ENCODE measurements at regions of chr6 and their contacts with region 1.

Region 1: DNA sequence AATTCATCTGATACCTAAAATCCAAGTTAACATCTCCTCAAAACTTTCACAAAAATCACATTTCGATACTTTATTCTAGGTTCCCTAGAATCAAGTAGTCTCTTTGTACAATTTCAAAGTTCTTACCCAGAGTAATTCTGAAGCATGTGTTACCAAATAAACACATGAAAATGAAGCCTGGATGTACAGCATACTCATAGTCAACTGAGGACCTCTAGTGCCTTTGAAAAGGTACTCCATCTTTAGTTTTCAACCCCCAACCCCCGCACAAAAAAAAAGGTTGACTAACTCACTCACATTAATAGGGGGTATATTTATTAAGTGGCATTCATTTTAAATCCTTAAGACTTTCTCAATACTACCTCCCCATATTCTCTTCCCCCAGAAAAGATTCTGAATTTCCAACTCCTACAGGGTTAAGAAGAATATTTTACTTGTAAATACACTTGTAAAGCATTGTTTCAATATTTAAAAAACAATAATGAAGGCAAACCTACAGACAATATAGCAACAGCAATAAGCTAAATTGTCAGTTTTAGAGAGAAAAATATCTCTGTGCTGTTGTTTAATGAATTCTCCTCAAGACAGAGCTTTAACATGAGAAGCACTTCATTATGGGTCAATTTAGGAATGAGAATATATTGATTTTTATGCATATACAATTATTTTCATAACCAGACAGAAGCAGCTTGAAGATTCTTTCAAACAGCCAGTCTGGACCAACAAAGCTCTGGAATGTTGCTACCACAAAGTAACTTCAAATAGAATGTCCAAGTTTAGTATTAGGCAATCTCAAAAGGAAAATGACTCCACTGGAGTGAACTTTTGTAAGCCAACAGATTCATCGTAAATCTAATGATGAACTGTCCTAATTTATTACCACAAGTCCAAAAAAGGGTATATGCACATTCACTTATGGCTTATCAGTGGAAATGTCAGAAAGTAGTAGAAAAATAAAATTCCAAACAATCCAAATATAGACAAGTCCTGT is 3.3 kb downstream of the PLN start:
- DNase-seq: peak in 4 of 5 donors; percentile 30 to 54 (median 41)
- H3K4me3 ChIP-seq: no peak overlapping the region
- H3K4me3 Mint-ChIP-seq: peak overlapping the region in 1 of 8 donors; percentile 57
- H3K27ac ChIP-seq: no peak overlapping the region
- H3K27ac Mint-ChIP-seq: peak overlapping the region in 3 of 7 donors; percentile 52 to 74 (median 72)
- H3K4me1 ChIP-seq: peaks cover 23% of the 10 kb centered on the region
- H3K4me1 Mint-ChIP-seq: peaks cover 18 to 37% (median 31%) of the 10 kb centered on the region in 4 donors
- H3K27me3 ChIP-seq: no peaks in the 10 kb centered on the region
- H3K27me3 Mint-ChIP-seq: no peaks in the 10 kb centered on the region

Region 2: GRCh38 chr6:117346142-117346930 is 1205.0 kb before region 1 on chr6:
- CTCF ChIA-PET with region 1: no interaction called
- POLR2A ChIA-PET with region 1: no interaction called
- intact Hi-C with region 1: loop called (anchors 10 kb)
- DNase-seq: peak in 4 of 5 donors; percentile 22 to 31 (median 28)
- H3K4me3 ChIP-seq: no peak overlapping the region
- H3K4me3 Mint-ChIP-seq: peak overlapping the region in 1 of 8 donors; percentile 12
- H3K27ac ChIP-seq: no peak overlapping the region
- H3K27ac Mint-ChIP-seq: no peak overlapping the region
- H3K4me1 ChIP-seq: no peaks in the 10 kb centered on the region
- H3K4me1 Mint-ChIP-seq: no peaks in the 10 kb centered on the region
- H3K27me3 ChIP-seq: no peaks in the 10 kb centered on the region
- H3K27me3 Mint-ChIP-seq: peaks cover 5 to 6% of the 10 kb centered on the region in 2 donors

Region 3: DNA sequence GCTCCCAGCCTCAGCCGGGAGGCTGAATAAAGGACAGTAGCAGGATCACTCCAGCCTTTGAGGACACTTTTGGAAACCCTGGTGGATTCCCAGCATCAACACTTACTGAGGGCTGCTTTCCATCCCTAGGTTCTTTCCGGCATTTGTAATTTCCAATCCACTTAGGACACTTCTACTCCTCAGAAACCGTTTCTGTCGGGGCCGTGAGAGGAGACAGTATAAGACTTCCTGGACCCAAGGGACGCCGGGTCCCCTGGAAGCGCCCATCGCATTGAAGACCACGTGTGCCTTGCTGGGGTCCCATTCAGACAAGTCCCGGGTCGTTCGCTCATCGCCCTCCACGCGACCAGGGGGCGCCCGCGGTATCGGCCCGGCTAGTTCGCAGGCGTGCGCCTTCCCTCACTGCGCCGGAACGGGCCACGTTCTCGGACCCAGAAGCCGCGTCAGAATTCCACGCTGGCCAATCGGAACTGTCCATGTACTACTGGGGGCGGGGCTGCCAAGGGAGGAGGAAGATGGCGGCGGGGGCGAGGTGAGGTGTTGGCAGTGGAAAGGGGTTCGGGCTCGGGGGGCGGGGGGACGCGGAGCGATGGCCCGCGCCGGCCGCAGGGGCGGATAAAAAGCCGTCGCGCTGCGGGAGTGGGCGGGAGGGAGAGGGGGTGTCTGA is 876.2 kb before region 1 on chr6 and contains the start of gene NUS1:
- CTCF ChIA-PET with region 1: no interaction called
- POLR2A ChIA-PET with region 1: no interaction called
- intact Hi-C with region 1: loop called (anchors 10 kb)
- DNase-seq: peak; percentile 97
- H3K4me3 ChIP-seq: peak within 1 kb of the TSS; percentile 81 to 84
- H3K4me3 Mint-ChIP-seq: peak within 1 kb of the TSS; percentile 89 to 96 (median 93)
- H3K27ac ChIP-seq: peak within 1 kb of the TSS; percentile 67
- H3K27ac Mint-ChIP-seq: peak within 1 kb of the TSS; percentile 85 to 97 (median 95)
- H3K4me1 ChIP-seq: peaks cover 37% of the 10 kb centered on the region
- H3K4me1 Mint-ChIP-seq: peaks cover 38 to 64% (median 52%) of the 10 kb centered on the region in 4 donors
- H3K27me3 ChIP-seq: no peaks in the 10 kb centered on the region
- H3K27me3 Mint-ChIP-seq: no peaks in the 10 kb centered on the region
- total RNA-seq, gene NUS1: 33.0 to 33.2 TPM

Region 4: GRCh38 chr6:118537574-118537973 is 13.8 kb before region 1 on chr6:
- CTCF ChIA-PET with region 1: no interaction called
- POLR2A ChIA-PET with region 1: no interaction called
- intact Hi-C with region 1: no loop called
- DNase-seq: no peak
- H3K4me3 ChIP-seq: no peak overlapping the region
- H3K4me3 Mint-ChIP-seq: no peak overlapping the region
- H3K27ac ChIP-seq: no peak overlapping the region
- H3K27ac Mint-ChIP-seq: peak overlapping the region in 1 of 7 donors; percentile 1
- H3K4me1 ChIP-seq: peaks cover 7% of the 10 kb centered on the region
- H3K4me1 Mint-ChIP-seq: peaks cover 24 to 36% (median 30%) of the 10 kb centered on the region in 4 donors
- H3K27me3 ChIP-seq: no peaks in the 10 kb centered on the region
- H3K27me3 Mint-ChIP-seq: no peaks in the 10 kb centered on the region

Measured in CD4-positive, alpha-beta memory T cell (primary cell).